A549 (cell line): ENCODE measurements at regions of chr16 and their contacts with region 1.

Region 1: DNA sequence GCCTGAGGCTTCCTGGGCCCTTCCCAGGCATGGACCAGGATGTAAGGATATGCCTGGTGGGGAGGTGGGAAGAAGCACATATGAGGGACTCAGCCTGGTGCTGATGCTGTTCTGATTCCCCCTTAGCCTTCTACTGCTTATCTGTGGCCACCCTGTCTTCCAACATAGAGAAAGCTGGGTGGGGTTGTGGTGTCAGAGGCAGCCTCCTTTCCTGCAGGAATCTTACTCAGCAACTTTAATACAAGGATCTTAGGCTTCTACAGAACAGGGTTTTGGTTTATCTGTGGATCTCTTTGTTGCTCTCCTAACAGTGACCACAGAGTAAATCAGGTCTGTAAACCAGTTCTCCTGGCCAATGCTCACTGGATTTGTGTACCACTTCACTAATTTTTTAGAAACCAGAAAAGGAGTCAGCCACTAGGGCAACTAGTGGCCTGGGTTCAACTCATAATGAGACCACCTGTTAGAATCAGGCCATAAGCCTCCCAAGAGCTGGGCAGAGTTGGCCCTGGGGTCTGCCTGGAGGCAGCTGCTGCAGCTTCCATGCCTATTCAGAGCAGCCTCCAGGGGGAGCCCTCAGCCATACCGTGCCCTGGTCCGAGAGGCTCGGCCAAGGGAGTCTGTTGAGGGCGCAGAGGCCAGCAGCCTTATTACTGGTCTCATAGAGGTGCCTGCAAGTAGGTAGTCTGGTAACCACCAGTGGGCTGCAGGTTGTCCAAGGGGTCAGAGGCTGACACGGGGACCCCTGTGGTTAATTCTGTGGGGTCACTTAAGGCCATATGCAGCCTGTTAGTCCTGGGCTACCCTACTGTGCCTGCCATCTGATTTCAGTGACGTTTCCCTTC is 7.1 kb downstream of the HAS3 start:
- DNase-seq: peak; percentile 66 to 85
- ATAC-seq: peak; percentile 89 to 92
- H3K4me3 ChIP-seq: no peak overlapping the region
- H3K27ac ChIP-seq: peak overlapping the region in 1 of 2 experiments; percentile 17; a peak in 1 of 6 replicates
- H3K4me1 ChIP-seq: peaks cover 12% of the 10 kb centered on the region
- CTCF ChIP-seq: peak; percentile 77
- EP300 ChIP-seq: no peak
- POLR2A ChIP-seq: no peak
- RAD21 ChIP-seq: peak; percentile 53 to 55

Region 2: DNA sequence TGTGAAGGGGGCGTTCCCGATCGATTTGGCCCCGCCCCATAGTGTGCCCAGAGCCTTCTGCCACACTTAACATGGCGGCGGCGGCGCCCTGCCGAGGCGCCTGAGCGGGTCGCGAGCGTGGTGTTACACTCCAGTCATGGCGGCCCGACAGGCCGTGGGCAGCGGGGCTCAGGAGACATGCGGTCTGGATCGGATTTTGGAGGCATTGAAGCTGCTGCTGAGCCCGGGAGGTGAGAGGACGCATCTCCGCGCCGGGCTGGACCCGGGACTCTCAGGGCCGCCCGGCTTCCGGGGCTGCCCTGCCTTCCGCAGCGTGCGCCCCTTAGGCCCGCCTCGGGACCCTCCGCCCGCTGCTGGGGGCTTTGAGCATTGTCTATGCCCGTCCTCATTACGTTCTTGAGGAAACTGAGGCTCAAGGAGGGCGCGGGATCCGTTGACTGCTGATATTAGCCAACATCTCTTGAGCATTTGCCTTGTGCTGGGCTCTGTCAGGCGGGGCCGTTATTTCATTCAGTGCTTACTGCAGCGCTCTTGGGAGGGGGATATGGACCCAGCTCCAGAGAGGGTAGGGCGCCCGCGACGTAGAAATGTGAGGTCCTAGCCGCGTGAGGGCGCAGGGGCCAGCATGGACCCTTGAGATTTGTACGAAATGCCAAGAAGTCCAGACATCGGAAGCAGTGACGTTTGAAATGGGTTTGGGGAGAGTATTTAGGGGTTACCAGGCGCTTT is 268.9 kb before region 1 on chr16 and contains the start of gene TANGO6:
- CTCF ChIA-PET with region 1: interaction called, 21 read pairs
- POLR2A ChIA-PET with region 1: no interaction called
- DNase-seq: peak; percentile 74 to 85
- ATAC-seq: peak; percentile 95 to 96
- H3K4me3 ChIP-seq: peak within 1 kb of the TSS; percentile 75
- H3K27ac ChIP-seq: peak within 1 kb of the TSS; percentile 93 to 99
- H3K4me1 ChIP-seq: 0 out of 3 replicates have a peak, but pooled peaks cover 5% of the 10 kb centered on the region
- CTCF ChIP-seq: peak; percentile 47
- EP300 ChIP-seq: no peak
- POLR2A ChIP-seq: peak; percentile 94
- RAD21 ChIP-seq: peak in 1 of 2 experiments; percentile 23; a peak in 4 of 5 replicates
- polyA plus RNA-seq, gene TANGO6: 19.5 and 30.2 TPM in 2 replicates

Region 3: DNA sequence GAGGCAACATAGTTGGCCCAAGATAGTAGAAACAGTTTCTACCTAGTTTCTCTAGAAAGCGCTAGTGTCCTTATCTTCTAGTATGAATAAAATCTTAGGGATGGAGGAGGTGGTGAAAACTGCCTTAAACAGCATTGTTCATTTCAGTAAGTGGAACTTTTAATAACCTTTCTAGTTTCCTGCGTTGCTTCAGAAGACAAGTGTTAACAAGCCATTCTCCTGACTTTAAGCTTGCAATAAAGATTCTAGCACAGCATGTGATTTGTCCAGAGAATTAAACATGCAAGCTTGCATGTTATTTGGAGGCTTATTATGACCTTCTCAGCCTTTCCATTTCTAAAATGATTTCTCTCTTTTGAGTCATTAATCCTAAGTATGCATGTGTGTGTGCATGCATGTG is 196.9 kb before region 1 on chr16:
- CTCF ChIA-PET with region 1: interaction called, 503 read pairs
- POLR2A ChIA-PET with region 1: no interaction called
- DNase-seq: no peak
- ATAC-seq: no peak
- H3K4me3 ChIP-seq: no peak overlapping the region
- H3K27ac ChIP-seq: no peak overlapping the region
- H3K4me1 ChIP-seq: no peaks in the 10 kb centered on the region
- CTCF ChIP-seq: no peak
- EP300 ChIP-seq: no peak
- POLR2A ChIP-seq: no peak
- RAD21 ChIP-seq: no peak

Region 4: DNA sequence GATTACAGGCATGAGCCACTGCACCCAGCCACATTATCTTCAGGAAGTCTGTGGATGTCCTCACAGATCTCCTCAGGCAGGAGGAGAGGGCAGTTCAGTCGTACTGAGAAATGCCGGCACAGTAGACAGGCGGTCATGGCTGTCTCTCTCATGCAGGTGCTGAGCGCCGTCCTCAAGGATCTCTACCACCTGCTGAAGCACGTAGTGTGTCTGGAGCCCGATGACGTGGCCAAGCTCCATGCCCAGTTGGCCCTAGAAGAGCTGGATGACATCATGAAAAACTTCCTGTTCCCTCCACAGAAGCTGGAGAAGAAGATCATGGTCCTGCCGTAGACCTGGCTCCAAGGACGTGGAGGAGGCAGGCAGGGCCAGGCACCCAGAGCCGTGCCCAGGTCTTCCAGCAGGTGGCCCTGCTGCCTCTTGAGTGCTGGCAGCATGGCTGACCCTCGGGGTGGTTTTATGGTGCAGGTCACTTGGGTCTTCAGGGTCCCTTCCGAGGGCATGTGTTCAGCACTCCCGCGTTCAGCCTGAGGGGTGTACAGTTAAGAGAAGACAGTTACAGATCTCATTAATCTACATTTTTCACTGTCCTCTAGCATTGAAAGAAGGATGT is 29.1 kb before region 1 on chr16:
- CTCF ChIA-PET with region 1: interaction called, 15 read pairs
- POLR2A ChIA-PET with region 1: no interaction called
- DNase-seq: no peak
- ATAC-seq: peak in 1 of 2 experiments; percentile 80; a peak in 3 of 6 replicates
- H3K4me3 ChIP-seq: no peak overlapping the region
- H3K27ac ChIP-seq: no peak overlapping the region
- H3K4me1 ChIP-seq: peaks cover 5% of the 10 kb centered on the region; the same call in 2 of the 3 replicates
- CTCF ChIP-seq: 0 out of 3 replicates have a peak, but pooled peaks have one; percentile 11
- EP300 ChIP-seq: no peak
- POLR2A ChIP-seq: no peak
- RAD21 ChIP-seq: peak in 1 of 2 experiments; percentile 26; a peak in 1 of 5 replicates